ENCODE measurements at regions of chr6 and their contacts with region 1.

Region 1: DNA sequence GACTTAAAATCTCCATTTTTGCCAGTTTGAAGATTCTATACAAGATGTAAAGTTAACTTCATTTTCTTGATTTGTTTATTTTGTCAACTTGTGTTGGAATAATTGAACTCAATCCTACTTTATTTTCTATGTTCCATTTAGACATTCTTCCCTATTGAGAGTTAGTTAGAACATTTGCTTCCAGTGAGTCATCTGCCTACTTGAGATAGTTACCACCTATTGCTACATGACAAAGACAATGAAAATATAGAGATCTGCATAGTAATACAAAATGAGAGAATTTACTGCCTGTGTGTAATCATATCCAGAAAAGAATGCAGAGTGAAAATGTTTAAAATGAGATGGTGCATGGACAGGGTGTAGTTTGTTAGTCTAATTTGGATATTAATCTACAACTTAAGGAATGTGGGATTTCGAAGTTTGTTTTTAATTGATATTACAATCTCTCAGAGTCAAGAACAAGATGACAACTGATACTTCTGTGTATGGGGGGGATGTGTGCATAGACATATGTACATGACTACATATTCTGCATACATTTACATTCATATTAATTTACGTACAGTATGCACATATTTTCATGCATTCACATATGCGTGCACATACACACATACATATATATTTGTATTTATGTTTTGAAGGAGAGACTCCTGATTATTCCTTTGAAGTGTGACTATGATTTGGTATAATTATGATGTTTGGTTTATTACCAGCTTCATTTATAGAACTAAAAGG is 420.1 kb downstream of the NKAIN2 start:
- DNase-seq: no peak
- ATAC-seq: no peak
- H3K4me3 ChIP-seq: no peak overlapping the region
- H3K27ac ChIP-seq: no peak overlapping the region
- H3K4me1 ChIP-seq: no peaks in the 10 kb centered on the region
- H3K27me3 ChIP-seq: no peaks in the 10 kb centered on the region
- CTCF ChIP-seq: no peak

Region 2: GRCh38 chr6:123802697-123803496 is 420.9 kb before region 1 on chr6:
- CTCF ChIA-PET with region 1: no interaction called
- POLR2A ChIA-PET with region 1: no interaction called
- in situ Hi-C with region 1: no loop called
- intact Hi-C with region 1: no loop called
- DNase-seq: peak; percentile 65
- ATAC-seq: peak; percentile 91
- H3K4me3 ChIP-seq: peak overlapping the region; percentile 79
- H3K27ac ChIP-seq: peak overlapping the region; percentile 87
- H3K4me1 ChIP-seq: peaks cover 26% of the 10 kb centered on the region
- H3K27me3 ChIP-seq: no peaks in the 10 kb centered on the region
- CTCF ChIP-seq: peak; percentile 98

Region 3: DNA sequence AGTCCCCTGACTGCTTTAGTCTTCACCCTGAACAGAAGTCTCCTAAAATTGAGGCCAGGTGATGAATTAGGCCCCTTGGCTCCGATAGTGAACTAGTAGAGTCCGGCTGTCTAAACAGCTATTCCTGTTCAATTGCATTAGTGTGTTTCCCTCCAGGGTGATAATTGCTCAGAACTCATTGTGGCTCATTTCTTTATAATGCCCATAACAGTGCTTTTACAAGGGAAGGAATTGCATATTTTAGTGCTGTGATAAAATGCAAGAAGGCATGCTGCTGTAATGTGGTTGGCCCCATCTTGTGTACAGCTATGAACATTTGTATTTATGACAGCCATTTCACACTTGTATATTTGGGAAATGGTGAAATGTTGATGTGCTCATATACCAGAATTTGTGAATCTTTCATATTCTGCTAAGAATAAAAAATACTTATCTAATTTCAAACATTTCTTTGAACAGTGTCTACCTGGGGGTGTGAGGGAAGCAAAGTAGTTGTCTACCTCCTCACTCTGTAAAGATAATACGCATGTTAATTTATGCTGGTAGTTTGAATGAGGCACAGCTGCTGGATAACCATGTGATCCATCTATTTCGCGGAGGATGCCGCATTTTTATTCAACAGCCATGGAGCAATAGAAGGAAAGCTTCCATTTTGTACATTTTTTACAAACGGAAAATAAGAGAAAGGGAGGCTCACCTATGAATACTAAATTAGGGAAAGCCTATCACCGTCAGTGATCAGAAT is 31.3 kb after region 1 on chr6:
- CTCF ChIA-PET with region 1: no interaction called
- POLR2A ChIA-PET with region 1: interaction called, 13 read pairs
- in situ Hi-C with region 1: no loop called
- intact Hi-C with region 1: no loop called
- DNase-seq: no peak
- ATAC-seq: no peak
- H3K4me3 ChIP-seq: no peak overlapping the region
- H3K27ac ChIP-seq: peak overlapping the region; percentile 8; the same call in 1 of the 2 replicates
- H3K4me1 ChIP-seq: no peaks in the 10 kb centered on the region
- H3K27me3 ChIP-seq: no peaks in the 10 kb centered on the region
- CTCF ChIP-seq: no peak